ENCODE measurements at regions of chr17 and their contacts with region 1.

Region 1: GRCh38 chr17:57121338-57122042 is 36.4 kb downstream of the AKAP1 start:
- DNase-seq: peak in 1 of 2 experiments; percentile 69
- H3K4me3 ChIP-seq: no peak overlapping the region
- H3K4me1 ChIP-seq: no peaks in the 10 kb centered on the region
- H3K27me3 ChIP-seq: no peaks in the 10 kb centered on the region

Region 2: GRCh38 chr17:57747221-57748017 is 625.9 kb after region 1 on chr17:
- in situ Hi-C with region 1: loop called (anchors 10 kb)
- DNase-seq: peak; percentile 59 to 79
- H3K4me3 ChIP-seq: no peak overlapping the region
- H3K4me1 ChIP-seq: no peaks in the 10 kb centered on the region
- H3K27me3 ChIP-seq: peaks cover 22% of the 10 kb centered on the region; the same call in 1 of the 2 replicates

Region 3: GRCh38 chr17:57833179-57833939 is 711.9 kb after region 1 on chr17:
- in situ Hi-C with region 1: loop called (anchors 10 kb)
- DNase-seq: peak; percentile 73 to 87
- H3K4me3 ChIP-seq: peak overlapping the region; percentile 12
- H3K4me1 ChIP-seq: peaks cover 6% of the 10 kb centered on the region
- H3K27me3 ChIP-seq: no peaks in the 10 kb centered on the region

Measured in HAP-1 (cell line).